Activated CD4-positive, alpha-beta T cell treated with anti-CD3 and anti-CD28 coated beads for 36 hours (primary cell): ENCODE measurements at regions of chr1 and their contacts with region 1.

Region 1: GRCh38 chr1:20151906-20152598 is 12.9 kb downstream of the PLA2G2F start:
- DNase-seq: peak; percentile 88
- ATAC-seq: peak; percentile 97
- H3K4me3 Mint-ChIP-seq: peak overlapping the region; percentile 48
- H3K27ac Mint-ChIP-seq: no peak overlapping the region
- H3K4me1 Mint-ChIP-seq: peaks cover 9% of the 10 kb centered on the region
- H3K27me3 Mint-ChIP-seq: no peaks in the 10 kb centered on the region

Region 2: DNA sequence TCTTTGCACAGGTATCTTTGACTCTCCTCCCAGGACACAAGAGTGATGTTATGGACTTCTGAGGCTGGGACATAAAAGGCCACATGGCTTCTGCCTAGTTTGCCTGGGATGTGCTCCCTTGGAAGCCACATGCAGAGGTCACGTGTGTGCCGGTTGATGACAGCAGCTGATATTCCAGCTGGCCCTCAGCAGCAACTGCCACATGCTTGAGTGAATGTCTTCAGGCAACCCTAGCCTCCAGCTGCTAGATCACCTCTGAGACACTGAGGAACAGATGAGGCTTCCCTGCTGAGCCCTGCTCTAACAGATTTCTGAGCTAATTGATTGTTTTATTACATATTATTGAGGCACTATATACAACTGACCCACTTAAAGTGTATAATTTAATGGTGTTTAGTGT is 851.8 kb before region 1 on chr1:
- CTCF ChIA-PET with region 1: no interaction called
- POLR2A ChIA-PET with region 1: no interaction called
- intact Hi-C with region 1: no loop called
- DNase-seq: no peak
- ATAC-seq: no peak
- H3K4me3 Mint-ChIP-seq: no peak overlapping the region
- H3K27ac Mint-ChIP-seq: no peak overlapping the region
- H3K4me1 Mint-ChIP-seq: no peaks in the 10 kb centered on the region
- H3K27me3 Mint-ChIP-seq: no peaks in the 10 kb centered on the region

Region 3: DNA sequence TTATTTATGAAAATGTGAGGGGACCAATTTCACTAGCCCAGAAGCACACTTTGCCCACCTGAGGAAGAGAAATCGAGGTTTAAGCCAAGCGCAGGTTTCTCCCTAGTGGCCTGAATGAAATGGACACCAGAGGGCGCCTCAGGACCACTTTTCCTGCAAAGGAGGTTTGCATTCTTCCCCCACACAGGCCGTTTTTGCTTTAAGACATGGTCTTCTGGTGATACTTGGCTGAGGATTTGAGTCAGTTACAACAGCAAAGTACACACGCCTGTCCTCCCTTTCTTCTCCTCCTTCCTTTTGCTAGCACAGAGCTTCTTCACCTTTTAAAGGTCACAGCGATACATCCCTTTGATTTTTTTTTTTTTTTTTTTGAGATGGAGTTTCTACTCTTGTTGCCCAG is 234.0 kb before region 1 on chr1:
- CTCF ChIA-PET with region 1: interaction called, 20 read pairs
- POLR2A ChIA-PET with region 1: no interaction called
- intact Hi-C with region 1: loop called (anchors 1 kb)
- DNase-seq: peak; percentile 90
- ATAC-seq: peak; percentile 78
- H3K4me3 Mint-ChIP-seq: no peak overlapping the region
- H3K27ac Mint-ChIP-seq: no peak overlapping the region
- H3K4me1 Mint-ChIP-seq: peaks cover 2% of the 10 kb centered on the region
- H3K27me3 Mint-ChIP-seq: no peaks in the 10 kb centered on the region

Region 4: GRCh38 chr1:19974822-19975416 is 177.1 kb before region 1 on chr1:
- CTCF ChIA-PET with region 1: interaction called, 14 read pairs
- POLR2A ChIA-PET with region 1: no interaction called
- intact Hi-C with region 1: loop called (anchors 1 to 5 kb)
- DNase-seq: peak; percentile 46
- ATAC-seq: peak; percentile 65
- H3K4me3 Mint-ChIP-seq: no peak overlapping the region
- H3K27ac Mint-ChIP-seq: no peak overlapping the region
- H3K4me1 Mint-ChIP-seq: no peaks in the 10 kb centered on the region
- H3K27me3 Mint-ChIP-seq: peaks cover 19% of the 10 kb centered on the region

Region 5: DNA sequence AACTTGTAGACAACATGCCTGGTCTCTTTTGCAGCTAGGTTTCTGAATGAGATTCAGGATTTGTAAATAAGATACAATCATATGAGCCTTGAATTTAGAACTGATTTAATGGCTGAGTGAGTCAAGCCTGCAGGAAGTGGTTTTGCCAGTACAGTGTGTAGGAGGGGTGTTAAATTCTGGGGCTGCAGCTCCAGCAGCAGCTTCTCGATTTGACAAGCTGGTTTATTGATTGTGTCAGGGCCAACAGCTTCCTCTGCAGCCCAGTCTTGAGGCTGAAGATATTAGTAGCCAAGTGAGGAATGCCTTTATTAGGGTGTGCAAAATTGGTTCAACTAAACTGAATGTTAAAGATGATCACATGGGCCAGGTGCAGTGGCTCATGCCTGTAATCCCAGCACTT is 93.5 kb before region 1 on chr1:
- CTCF ChIA-PET with region 1: no interaction called
- POLR2A ChIA-PET with region 1: no interaction called
- intact Hi-C with region 1: loop called in 1 of 2 experiments (anchors 5 kb)
- DNase-seq: peak; percentile 78
- ATAC-seq: peak; percentile 99
- H3K4me3 Mint-ChIP-seq: no peak overlapping the region
- H3K27ac Mint-ChIP-seq: no peak overlapping the region
- H3K4me1 Mint-ChIP-seq: peaks cover 33% of the 10 kb centered on the region
- H3K27me3 Mint-ChIP-seq: peaks cover 9% of the 10 kb centered on the region

Region 6: GRCh38 chr1:20100632-20101355 is 51.3 kb before region 1 on chr1:
- CTCF ChIA-PET with region 1: interaction called, 8 read pairs
- POLR2A ChIA-PET with region 1: no interaction called
- intact Hi-C with region 1: loop called (anchors 1 to 2 kb)
- DNase-seq: peak; percentile 59
- ATAC-seq: peak; percentile 75
- H3K4me3 Mint-ChIP-seq: no peak overlapping the region
- H3K27ac Mint-ChIP-seq: no peak overlapping the region
- H3K4me1 Mint-ChIP-seq: peaks cover 5% of the 10 kb centered on the region
- H3K27me3 Mint-ChIP-seq: peaks cover 2% of the 10 kb centered on the region

Region 7: GRCh38 chr1:20178634-20179370 is 26.8 kb after region 1 on chr1:
- CTCF ChIA-PET with region 1: interaction called, 13 read pairs
- POLR2A ChIA-PET with region 1: no interaction called
- intact Hi-C with region 1: no loop called
- DNase-seq: no peak
- ATAC-seq: no peak
- H3K4me3 Mint-ChIP-seq: no peak overlapping the region
- H3K27ac Mint-ChIP-seq: no peak overlapping the region
- H3K4me1 Mint-ChIP-seq: peaks cover 14% of the 10 kb centered on the region
- H3K27me3 Mint-ChIP-seq: no peaks in the 10 kb centered on the region